ENCODE measurements at regions of chr2 and their contacts with region 1.

Region 1: GRCh38 chr2:143686585-143687164 is 557.5 kb downstream of the ARHGAP15 start:
- DNase-seq: no peak
- ATAC-seq: peak; percentile 69
- H3K4me3 ChIP-seq: no peak overlapping the region
- H3K27ac ChIP-seq: no peak overlapping the region
- H3K4me1 ChIP-seq: no peaks in the 10 kb centered on the region
- H3K27me3 ChIP-seq: no peaks in the 10 kb centered on the region
- CTCF ChIP-seq: peak; percentile 33 to 53 (median 42); a peak in 5 of 6 replicates
- EP300 ChIP-seq: no peak
- POLR2A ChIP-seq: no peak
- RAD21 ChIP-seq: peak; percentile 54

Region 2: GRCh38 chr2:143489145-143489544 is 197.5 kb before region 1 on chr2:
- CTCF ChIA-PET with region 1: no interaction called
- POLR2A ChIA-PET with region 1: no interaction called
- RAD21 ChIA-PET with region 1: no interaction called
- SMC1A ChIA-PET with region 1: no interaction called
- in situ Hi-C with region 1: no loop called
- intact Hi-C with region 1: no loop called
- DNase-seq: no peak
- ATAC-seq: no peak
- H3K4me3 ChIP-seq: no peak overlapping the region
- H3K27ac ChIP-seq: no peak overlapping the region
- H3K4me1 ChIP-seq: no peaks in the 10 kb centered on the region
- H3K27me3 ChIP-seq: no peaks in the 10 kb centered on the region
- CTCF ChIP-seq: no peak
- EP300 ChIP-seq: no peak
- POLR2A ChIP-seq: no peak
- RAD21 ChIP-seq: no peak

Region 3: GRCh38 chr2:143697744-143698143 is 11.1 kb after region 1 on chr2:
- CTCF ChIA-PET with region 1: interaction called, 23 read pairs
- POLR2A ChIA-PET with region 1: no interaction called
- RAD21 ChIA-PET with region 1: no interaction called
- SMC1A ChIA-PET with region 1: interaction called, 10 read pairs
- in situ Hi-C with region 1: no loop called
- intact Hi-C with region 1: no loop called
- DNase-seq: no peak
- ATAC-seq: peak; percentile 69
- H3K4me3 ChIP-seq: no peak overlapping the region
- H3K27ac ChIP-seq: peak overlapping the region; percentile 37; the same call in 1 of the 2 replicates
- H3K4me1 ChIP-seq: peaks cover 28% of the 10 kb centered on the region
- H3K27me3 ChIP-seq: no peaks in the 10 kb centered on the region
- CTCF ChIP-seq: no peak
- EP300 ChIP-seq: no peak
- POLR2A ChIP-seq: no peak
- RAD21 ChIP-seq: no peak

Measured in GM12878 (cell line).